ENCODE measurements at regions of chr1 and their contacts with region 1.

Region 1: GRCh38 chr1:16146279-16147155 is 9.4 kb downstream of the EPHA2 start:
- DNase-seq: peak; percentile 75 to 90
- H3K4me3 ChIP-seq: peak overlapping the region; percentile 86
- H3K27ac ChIP-seq: peak overlapping the region; percentile 92
- H3K4me1 ChIP-seq: peaks cover 94% of the 10 kb centered on the region
- H3K27me3 ChIP-seq: no peaks in the 10 kb centered on the region
- CTCF ChIP-seq: no peak

Region 2: DNA sequence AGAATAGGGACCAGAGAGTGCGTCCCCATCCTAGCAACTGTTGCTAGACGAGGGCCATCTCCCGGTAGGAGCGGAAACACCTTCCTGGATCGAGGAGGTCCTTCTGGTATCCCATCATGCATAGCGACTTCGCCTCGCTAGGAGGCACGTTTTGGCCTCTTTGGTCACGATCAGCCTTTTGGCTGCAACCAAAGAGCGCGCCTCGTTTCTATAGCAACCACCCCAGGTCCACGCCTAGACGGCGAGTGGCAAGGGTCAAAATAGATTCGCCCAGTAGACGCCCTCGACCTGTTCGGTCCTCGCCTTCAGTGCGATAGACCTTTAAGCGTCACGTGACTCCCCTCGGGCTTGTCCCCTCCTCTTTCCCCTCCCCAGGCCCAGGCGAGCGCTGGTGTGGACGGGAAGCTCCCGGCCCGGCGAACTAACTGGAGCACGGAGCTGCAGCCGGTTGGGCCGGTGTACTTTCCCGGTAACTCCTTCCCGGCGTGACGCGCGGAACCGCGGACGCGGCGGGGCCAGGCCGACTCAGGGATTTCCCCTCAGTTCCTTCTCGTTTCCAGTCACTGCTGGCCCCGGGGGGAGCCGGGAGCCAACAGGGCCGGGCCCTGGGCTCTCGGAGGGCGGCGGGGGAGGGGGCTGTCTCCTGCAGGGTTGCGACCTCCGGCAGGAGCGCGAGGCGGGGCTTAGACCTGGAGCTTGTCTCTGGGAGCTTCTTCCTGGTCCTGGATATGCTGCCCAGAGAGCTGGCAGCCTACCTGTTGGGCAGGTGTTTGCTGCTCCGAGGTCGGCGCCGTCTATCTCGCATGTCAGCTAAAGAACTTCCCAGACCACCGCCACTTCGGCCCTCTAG is 619.8 kb before region 1 on chr1 and contains the start of gene DNAJC16:
- CTCF ChIA-PET with region 1: no interaction called
- POLR2A ChIA-PET with region 1: no interaction called
- intact Hi-C with region 1: loop called (anchors 10 kb)
- DNase-seq: peak; percentile 98 to 99
- H3K4me3 ChIP-seq: peak within 1 kb of the TSS; percentile 81
- H3K27ac ChIP-seq: peak within 1 kb of the TSS; percentile 69
- H3K4me1 ChIP-seq: peaks cover 17% of the 10 kb centered on the region
- H3K27me3 ChIP-seq: no peaks in the 10 kb centered on the region
- CTCF ChIP-seq: no peak
- total RNA-seq, gene DNAJC16: 12.0 and 18.8 TPM in 2 replicates

Region 3: DNA sequence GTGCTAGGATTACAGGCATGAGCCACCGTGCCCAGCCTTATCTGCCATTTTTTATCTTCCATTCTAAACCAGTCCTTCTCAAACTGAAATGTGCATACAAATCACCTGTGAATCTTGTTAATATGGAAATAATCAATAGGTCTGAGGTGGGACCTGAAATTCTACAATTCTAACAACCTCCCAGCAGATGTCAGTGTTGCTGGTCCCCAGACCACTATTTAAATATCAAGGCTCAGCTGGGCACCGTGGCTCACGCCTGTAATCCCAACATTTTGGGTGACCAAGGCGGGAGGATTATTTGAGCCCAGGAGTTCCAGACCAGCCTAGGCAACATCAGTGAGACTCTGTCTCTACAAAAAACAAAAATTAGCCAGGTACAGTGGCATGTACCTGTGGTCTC is 343.2 kb before region 1 on chr1:
- CTCF ChIA-PET with region 1: no interaction called
- POLR2A ChIA-PET with region 1: interaction called, 4 read pairs
- intact Hi-C with region 1: loop called (anchors 10 kb)
- DNase-seq: no peak
- H3K4me3 ChIP-seq: no peak overlapping the region
- H3K27ac ChIP-seq: no peak overlapping the region
- H3K4me1 ChIP-seq: peaks cover 41% of the 10 kb centered on the region
- H3K27me3 ChIP-seq: no peaks in the 10 kb centered on the region
- CTCF ChIP-seq: peak; percentile 39

Region 4: GRCh38 chr1:15885701-15886610 is 260.6 kb before region 1 on chr1:
- CTCF ChIA-PET with region 1: no interaction called
- POLR2A ChIA-PET with region 1: no interaction called
- intact Hi-C with region 1: no loop called
- DNase-seq: peak; percentile 74 to 94
- H3K4me3 ChIP-seq: peak overlapping the region; percentile 38; the same call in 1 of the 2 replicates
- H3K27ac ChIP-seq: peak overlapping the region; percentile 86
- H3K4me1 ChIP-seq: peaks cover 23% of the 10 kb centered on the region
- H3K27me3 ChIP-seq: no peaks in the 10 kb centered on the region
- CTCF ChIP-seq: no peak

Region 5: DNA sequence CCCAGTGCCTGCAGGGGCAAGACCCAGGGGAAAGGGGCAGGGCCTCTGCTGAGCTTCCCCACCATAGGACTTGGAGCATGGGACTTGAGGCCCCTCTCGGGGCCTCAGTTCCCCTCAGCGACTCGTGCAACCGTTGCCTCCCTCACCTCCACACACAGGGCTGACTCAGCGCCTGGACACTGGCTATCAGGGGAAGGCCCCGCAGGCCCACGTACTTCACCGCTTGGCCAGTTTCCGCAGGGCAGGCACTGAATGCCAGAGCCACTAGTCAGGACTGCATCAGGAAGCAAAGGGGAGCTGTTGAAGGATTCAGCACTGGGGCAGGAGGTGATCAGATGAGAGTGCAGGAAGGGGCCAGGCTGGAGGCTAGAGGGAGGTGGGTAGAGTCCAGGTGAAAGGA is 57.5 kb before region 1 on chr1:
- CTCF ChIA-PET with region 1: no interaction called
- POLR2A ChIA-PET with region 1: interaction called, 5 read pairs
- intact Hi-C with region 1: loop called (anchors 1 kb)
- DNase-seq: peak; percentile 87 to 97
- H3K4me3 ChIP-seq: peak overlapping the region; percentile 45; the same call in 1 of the 2 replicates
- H3K27ac ChIP-seq: peak overlapping the region; percentile 95
- H3K4me1 ChIP-seq: peaks cover 83% of the 10 kb centered on the region
- H3K27me3 ChIP-seq: no peaks in the 10 kb centered on the region
- CTCF ChIP-seq: no peak

Region 6: DNA sequence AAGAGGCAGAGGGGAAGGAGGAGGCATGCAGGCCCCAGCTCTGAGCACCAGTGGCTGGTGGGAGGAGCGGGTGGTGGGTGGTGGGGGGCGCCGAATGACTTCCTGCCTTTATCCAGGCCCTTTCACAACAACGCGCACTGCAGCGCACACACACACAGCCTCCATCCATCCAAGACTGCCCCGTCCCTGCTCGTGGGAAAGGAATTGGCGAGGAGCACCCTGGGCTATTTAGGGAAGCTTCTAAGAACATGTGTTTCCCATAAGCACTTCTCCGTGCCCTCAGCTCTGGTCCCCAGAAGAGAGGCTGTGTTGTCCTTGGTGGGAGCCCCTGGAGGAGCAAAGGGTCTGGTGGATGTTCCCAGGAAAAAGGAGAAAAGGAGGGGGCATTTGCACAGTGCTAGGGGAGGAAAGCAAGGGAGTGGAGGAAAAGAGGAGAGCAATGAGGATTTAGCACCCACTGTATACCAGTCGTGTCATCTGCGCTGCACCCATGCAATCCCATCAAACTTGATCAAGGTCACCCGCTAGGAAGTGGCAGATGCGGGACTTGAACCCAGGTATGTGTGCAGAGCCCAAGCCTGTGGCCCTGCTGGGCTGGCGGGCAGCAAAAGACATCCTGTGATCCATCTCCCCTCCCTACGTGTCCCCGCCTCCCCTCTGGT is 18.7 kb before region 1 on chr1:
- CTCF ChIA-PET with region 1: no interaction called
- POLR2A ChIA-PET with region 1: no interaction called
- intact Hi-C with region 1: no loop called
- DNase-seq: no peak
- H3K4me3 ChIP-seq: no peak overlapping the region
- H3K27ac ChIP-seq: no peak overlapping the region
- H3K4me1 ChIP-seq: peaks cover 47% of the 10 kb centered on the region
- H3K27me3 ChIP-seq: no peaks in the 10 kb centered on the region
- CTCF ChIP-seq: no peak

Region 7: DNA sequence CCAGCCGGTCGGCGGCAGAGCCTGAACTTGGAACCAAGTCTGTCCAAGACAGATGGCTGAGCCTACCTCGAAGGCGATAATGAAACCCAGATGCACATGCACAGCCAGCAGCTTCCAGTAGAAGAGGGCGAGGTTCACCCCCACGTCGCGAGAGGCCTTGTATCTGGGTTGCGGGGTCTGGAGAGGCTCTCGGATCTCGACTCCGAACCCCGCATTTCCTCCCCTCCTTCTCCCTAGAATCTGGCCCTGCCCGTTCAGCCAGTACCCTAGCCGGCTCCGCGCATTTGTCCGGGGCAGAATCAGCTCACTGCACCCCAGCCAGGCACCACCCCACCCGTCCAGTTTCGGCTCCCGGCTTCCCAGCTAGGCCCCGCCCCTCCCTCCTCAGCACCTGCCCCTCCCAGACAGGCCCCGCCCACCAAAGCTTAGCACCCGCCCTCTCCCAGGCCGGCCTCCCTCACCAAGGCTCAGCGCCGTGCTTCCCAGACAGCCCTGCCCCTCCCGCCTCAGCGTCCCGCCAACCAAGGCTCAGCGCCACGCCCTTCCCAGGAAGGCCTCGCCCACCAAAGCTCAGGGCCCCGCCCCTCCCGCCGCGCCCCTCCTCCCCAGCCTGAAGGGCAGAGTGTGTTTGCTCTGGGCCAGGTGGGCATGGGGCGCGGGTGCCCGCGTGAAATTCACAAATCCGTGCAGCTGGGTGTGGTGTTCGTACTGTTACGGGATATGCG is 70.7 kb after region 1 on chr1:
- CTCF ChIA-PET with region 1: no interaction called
- POLR2A ChIA-PET with region 1: interaction called, 10 read pairs
- intact Hi-C with region 1: loop called (anchors 2 kb)
- DNase-seq: peak; percentile 83 to 98
- H3K4me3 ChIP-seq: peak overlapping the region; percentile 51; the same call in 1 of the 2 replicates
- H3K27ac ChIP-seq: no peak overlapping the region
- H3K4me1 ChIP-seq: peaks cover 17% of the 10 kb centered on the region
- H3K27me3 ChIP-seq: no peaks in the 10 kb centered on the region
- CTCF ChIP-seq: no peak

Measured in PC-9 (cell line).